Activated CD4-positive, alpha-beta T cell treated with anti-CD3 and anti-CD28 coated beads for 36 hours (primary cell): ENCODE measurements at regions of chr6 and their contacts with region 1.

Region 1: GRCh38 chr6:52605610-52606185 is 28.8 kb upstream of the TRAM2 start:
- DNase-seq: no peak
- ATAC-seq: no peak
- H3K4me3 Mint-ChIP-seq: no peak overlapping the region
- H3K27ac Mint-ChIP-seq: no peak overlapping the region
- H3K4me1 Mint-ChIP-seq: no peaks in the 10 kb centered on the region
- H3K27me3 Mint-ChIP-seq: peaks cover 5% of the 10 kb centered on the region

Region 2: DNA sequence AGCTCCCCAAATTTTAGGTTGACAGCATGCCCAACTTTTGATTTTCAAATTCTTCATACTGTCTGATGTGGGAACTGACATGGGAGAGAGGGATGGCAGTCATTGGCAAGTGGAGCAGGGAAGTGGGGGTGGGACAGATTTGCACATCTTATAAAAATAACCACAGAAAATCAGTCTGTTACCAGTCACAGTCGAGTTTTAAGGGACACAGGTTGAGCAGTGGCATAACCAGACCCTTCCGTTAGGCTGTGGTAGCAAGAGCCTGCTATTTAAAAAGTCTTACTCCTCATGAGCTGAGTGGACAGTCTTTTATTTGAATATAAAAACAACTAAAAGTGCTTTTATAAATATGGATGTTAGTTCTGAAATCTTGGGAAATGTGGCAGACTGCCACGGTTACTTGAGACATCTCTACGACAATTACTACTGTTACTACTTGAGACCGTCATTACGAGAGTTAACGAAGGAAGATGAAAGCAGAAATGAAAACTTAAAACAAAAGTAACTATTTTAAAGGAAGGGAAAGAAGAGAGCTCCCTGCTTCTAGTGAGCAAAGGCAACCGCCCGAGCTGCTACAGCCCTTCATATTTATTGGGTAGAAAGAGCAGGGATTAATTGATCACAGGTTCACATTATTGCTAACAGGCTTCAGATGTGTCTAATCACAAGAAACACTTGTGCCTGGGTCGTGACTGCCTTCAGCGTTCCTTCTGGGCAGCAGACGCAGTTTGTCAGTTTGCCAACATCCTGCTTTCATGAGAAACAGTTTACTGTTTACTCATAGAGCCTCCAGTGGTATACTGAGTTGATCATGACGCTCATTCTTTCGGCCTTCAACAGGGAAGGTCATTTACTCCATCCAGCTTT is 114.3 kb before region 1 on chr6:
- CTCF ChIA-PET with region 1: no interaction called
- POLR2A ChIA-PET with region 1: no interaction called
- intact Hi-C with region 1: no loop called
- DNase-seq: no peak
- ATAC-seq: no peak
- H3K4me3 Mint-ChIP-seq: no peak overlapping the region
- H3K27ac Mint-ChIP-seq: no peak overlapping the region
- H3K4me1 Mint-ChIP-seq: no peaks in the 10 kb centered on the region
- H3K27me3 Mint-ChIP-seq: no peaks in the 10 kb centered on the region

Region 3: DNA sequence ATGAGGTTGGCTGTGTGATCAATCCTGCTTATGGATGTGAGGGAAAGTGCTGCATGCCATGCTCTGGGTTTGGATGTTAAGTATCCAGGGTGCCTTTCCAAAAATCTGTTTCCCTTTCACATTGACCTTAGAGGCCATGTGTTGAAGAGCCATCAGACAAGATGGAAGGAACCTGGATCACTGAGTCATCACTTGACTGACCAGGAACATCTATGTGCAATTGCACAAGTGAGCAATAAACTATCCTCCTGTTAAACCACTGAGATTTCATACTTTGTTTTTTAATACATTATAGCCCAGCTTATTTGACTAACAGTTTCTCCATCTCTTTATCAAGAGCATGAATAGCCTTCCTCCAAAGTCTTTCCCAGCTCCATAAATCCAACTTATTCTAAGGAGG is 47.5 kb after region 1 on chr6:
- CTCF ChIA-PET with region 1: interaction called, 11 read pairs
- POLR2A ChIA-PET with region 1: no interaction called
- intact Hi-C with region 1: no loop called
- DNase-seq: no peak
- ATAC-seq: no peak
- H3K4me3 Mint-ChIP-seq: no peak overlapping the region
- H3K27ac Mint-ChIP-seq: no peak overlapping the region
- H3K4me1 Mint-ChIP-seq: peaks cover 11% of the 10 kb centered on the region
- H3K27me3 Mint-ChIP-seq: peaks cover 6% of the 10 kb centered on the region